Activated CD4-positive, alpha-beta T cell treated with anti-CD3 and anti-CD28 coated beads for 36 hours (primary cell): ENCODE measurements at regions of chr4 and their contacts with region 1.

Region 1: GRCh38 chr4:121900132-121900983 is 30.1 kb upstream of the BBS7 start:
- DNase-seq: peak; percentile 69
- ATAC-seq: peak; percentile 89
- H3K4me3 Mint-ChIP-seq: no peak overlapping the region
- H3K27ac Mint-ChIP-seq: no peak overlapping the region
- H3K4me1 Mint-ChIP-seq: peaks cover 8% of the 10 kb centered on the region
- H3K27me3 Mint-ChIP-seq: peaks cover 5% of the 10 kb centered on the region

Region 2: DNA sequence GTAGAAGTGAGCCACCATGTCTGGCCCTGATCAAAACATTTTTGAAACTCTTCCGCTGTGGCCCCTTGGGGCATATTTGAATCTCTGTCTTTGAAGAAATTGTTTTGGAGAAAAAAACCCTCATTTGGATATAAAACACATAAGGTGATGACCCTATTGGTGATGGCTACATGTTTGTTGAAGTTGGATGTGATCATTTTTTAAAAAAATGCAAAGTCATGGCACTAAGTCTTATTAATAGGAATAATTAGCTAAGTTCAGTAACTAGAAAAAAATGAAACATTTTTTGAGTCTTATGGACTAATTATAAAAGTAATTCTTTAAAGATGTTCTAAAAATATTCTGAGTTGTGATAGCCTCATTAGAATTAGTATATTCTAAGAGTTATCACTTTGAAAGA is 12.2 kb before region 1 on chr4:
- CTCF ChIA-PET with region 1: interaction called, 19 read pairs
- POLR2A ChIA-PET with region 1: no interaction called
- intact Hi-C with region 1: no loop called
- DNase-seq: no peak
- ATAC-seq: no peak
- H3K4me3 Mint-ChIP-seq: no peak overlapping the region
- H3K27ac Mint-ChIP-seq: no peak overlapping the region
- H3K4me1 Mint-ChIP-seq: peaks cover 2% of the 10 kb centered on the region
- H3K27me3 Mint-ChIP-seq: peaks cover 20% of the 10 kb centered on the region

Region 3: GRCh38 chr4:121950212-121950679 is 49.9 kb after region 1 on chr4:
- CTCF ChIA-PET with region 1: interaction called, 8 read pairs
- POLR2A ChIA-PET with region 1: no interaction called
- intact Hi-C with region 1: loop called in 1 of 2 experiments (anchors 2 kb)
- DNase-seq: peak; percentile 94
- ATAC-seq: peak; percentile 87
- H3K4me3 Mint-ChIP-seq: peak overlapping the region; percentile 77
- H3K27ac Mint-ChIP-seq: no peak overlapping the region
- H3K4me1 Mint-ChIP-seq: peaks cover 4% of the 10 kb centered on the region
- H3K27me3 Mint-ChIP-seq: peaks cover 44% of the 10 kb centered on the region

Region 4: DNA sequence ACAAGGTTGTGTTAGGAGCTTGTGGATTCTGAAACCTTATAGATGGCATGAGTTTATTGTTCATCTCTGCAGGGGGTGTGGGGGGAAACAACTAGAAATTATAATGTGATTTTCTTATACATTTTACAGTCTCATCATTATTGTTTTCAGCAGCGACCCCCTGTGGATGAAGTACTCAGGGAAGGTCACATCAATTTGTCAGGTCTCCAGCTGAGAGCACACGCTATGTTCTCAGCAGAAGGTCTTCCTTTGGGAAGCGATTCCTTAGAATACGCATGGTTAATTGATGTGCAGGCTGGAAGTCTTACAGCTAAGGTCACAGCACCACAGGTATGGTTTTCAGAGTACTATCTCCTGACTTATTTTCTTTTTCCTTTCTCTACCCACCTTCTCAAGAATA is 324.0 kb after region 1 on chr4:
- CTCF ChIA-PET with region 1: interaction called, 8 read pairs
- POLR2A ChIA-PET with region 1: no interaction called
- intact Hi-C with region 1: loop called in 1 of 2 experiments (anchors 2 kb)
- DNase-seq: peak; percentile 43
- ATAC-seq: no peak
- H3K4me3 Mint-ChIP-seq: no peak overlapping the region
- H3K27ac Mint-ChIP-seq: no peak overlapping the region
- H3K4me1 Mint-ChIP-seq: peaks cover 6% of the 10 kb centered on the region
- H3K27me3 Mint-ChIP-seq: no peaks in the 10 kb centered on the region

Region 5: GRCh38 chr4:122914292-122914904 is 1014.0 kb after region 1 on chr4:
- CTCF ChIA-PET with region 1: interaction called, 3 read pairs
- POLR2A ChIA-PET with region 1: no interaction called
- intact Hi-C with region 1: loop called in 1 of 2 experiments (anchors 5 kb)
- DNase-seq: peak; percentile 51
- ATAC-seq: peak; percentile 85
- H3K4me3 Mint-ChIP-seq: no peak overlapping the region
- H3K27ac Mint-ChIP-seq: no peak overlapping the region
- H3K4me1 Mint-ChIP-seq: no peaks in the 10 kb centered on the region
- H3K27me3 Mint-ChIP-seq: no peaks in the 10 kb centered on the region